ENCODE measurements at regions of chr1 and their contacts with region 1.

Region 1: DNA sequence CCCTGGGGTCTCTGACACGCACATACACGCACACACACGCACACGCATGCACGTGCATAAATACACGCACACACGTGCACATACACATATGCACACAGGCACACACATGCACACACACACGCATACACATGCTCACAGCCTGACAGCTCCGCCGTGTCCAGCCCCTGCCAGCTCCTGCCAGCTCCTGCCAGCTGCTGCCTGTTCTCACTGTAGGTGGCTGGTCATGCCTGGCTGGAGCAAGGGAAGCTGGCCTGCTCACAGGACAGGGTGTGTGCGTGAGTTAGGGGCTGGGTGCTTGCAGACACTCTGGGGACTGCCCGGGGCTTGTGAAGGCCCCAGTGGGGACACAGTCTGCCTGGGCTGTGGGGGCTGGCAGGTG is 4.9 kb downstream of the PLCH2 start:
- DNase-seq: no peak
- H3K4me3 ChIP-seq: no peak overlapping the region
- H3K27ac ChIP-seq: peak overlapping the region; percentile 54
- H3K4me1 ChIP-seq: peaks cover 13% of the 10 kb centered on the region
- H3K27me3 ChIP-seq: no peaks in the 10 kb centered on the region
- CTCF ChIP-seq: no peak

Region 2: DNA sequence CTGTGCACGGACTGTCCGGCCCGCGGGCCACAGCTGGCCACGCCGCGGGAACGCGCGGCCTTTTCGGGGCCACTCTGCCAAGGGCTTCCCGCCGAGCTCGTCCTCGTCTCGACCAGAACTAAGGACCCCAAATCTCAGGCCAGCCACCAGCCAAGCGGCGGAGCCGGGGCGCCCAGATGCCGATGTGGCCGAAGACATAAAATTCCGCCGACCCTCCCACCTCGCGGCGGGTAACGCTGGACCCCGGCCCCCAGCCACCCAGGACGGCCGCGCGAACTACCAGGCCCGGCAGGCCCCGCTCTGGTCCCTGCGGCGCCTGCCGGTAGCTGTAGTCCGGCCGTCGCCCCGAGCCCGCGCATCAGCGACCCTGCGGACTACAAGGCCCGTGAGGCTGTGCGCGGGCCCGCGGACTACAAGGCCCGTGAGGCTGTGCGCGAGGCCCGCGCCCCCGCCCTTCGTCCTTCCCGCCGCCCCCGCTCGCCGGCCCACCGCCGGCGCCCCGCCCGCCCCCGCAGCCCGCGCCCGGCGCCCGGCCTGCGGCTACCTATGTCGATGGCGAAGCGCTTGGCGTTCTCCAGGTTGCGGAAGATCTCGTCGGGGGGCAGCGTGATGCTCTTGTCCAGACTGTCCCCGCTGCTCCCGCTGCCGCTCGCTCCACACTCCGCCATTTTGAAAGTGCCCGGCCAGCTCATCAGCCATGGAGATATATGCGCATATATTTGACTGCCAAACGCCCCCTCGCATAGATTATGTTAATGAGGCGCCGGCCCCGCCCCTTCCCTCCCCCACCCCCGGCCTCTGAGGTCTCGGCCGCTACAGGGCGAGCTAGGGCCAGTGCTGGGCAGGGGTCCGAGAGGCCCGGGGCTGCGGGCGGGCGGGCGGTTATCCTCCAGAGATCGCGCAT is 45.2 kb after region 1 on chr1 and contains the start of gene PANK4:
- CTCF ChIA-PET with region 1: no interaction called
- POLR2A ChIA-PET with region 1: interaction called, 10 read pairs
- intact Hi-C with region 1: no loop called
- DNase-seq: peak; percentile 97
- H3K4me3 ChIP-seq: peak within 1 kb of the TSS; percentile 99
- H3K27ac ChIP-seq: peak within 1 kb of the TSS; percentile 85
- H3K4me1 ChIP-seq: peaks cover 11% of the 10 kb centered on the region
- H3K27me3 ChIP-seq: peaks cover 35% of the 10 kb centered on the region
- CTCF ChIP-seq: no peak
- total RNA-seq, gene PANK4: 45.6 and 53.6 TPM in 2 replicates

Region 3: DNA sequence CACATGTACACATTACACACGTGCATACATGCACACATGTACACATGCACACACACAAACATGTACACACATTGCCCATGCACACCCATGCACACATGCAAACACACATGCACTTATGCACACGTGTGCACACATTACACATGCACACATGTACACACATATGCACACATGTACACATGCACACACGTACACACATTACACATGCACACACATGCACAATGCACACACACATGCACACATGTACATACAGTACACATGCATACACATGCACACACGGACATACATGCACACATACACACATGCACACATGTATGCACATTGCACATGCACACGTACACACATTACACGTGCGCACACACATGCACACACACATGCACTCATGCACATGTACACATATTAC is 415.8 kb after region 1 on chr1:
- CTCF ChIA-PET with region 1: no interaction called
- POLR2A ChIA-PET with region 1: no interaction called
- intact Hi-C with region 1: no loop called
- DNase-seq: no peak
- H3K4me3 ChIP-seq: no peak overlapping the region
- H3K27ac ChIP-seq: no peak overlapping the region
- H3K4me1 ChIP-seq: no peaks in the 10 kb centered on the region
- H3K27me3 ChIP-seq: no peaks in the 10 kb centered on the region
- CTCF ChIP-seq: no peak

Region 4: DNA sequence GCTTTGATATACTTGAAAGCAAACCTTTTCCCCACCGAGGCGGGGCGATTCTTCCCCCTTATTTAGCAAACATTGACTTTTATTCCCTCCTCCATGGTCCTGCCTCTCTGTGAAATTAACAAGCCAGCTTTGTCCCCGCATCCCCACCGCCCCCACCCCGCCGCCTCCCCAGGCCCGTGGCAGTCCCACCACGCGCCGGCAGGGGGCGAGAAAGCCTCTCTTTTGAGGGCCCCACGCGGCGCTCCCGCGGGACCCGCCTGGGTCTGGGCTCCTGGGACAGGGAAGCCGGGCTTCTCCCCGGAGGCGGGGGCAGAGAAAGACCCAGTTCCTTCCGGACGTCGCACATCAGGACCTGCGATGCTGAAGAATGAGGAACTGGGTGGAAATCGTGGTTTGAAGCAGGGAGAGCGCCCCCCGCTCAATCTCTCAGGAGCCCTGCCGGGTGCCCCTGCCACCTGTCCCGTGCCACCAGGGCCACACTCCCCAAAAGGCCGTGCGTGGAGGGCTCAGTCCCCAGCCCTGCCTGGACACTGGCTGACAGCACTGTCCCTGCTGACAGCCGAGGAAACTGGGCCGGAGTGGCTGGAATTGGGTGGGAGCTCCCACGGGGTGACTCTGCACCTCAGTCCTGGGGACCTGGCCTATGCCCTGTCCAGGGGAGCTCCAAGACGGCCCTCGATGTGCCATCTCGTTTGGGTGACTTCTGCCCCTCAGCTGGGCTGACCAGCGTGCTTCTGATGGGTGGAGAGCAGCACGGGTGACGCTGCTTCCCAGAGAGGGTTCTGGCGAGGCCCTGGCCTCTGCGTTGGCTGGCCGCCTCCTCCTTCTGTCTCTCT is 531.7 kb after region 1 on chr1:
- CTCF ChIA-PET with region 1: no interaction called
- POLR2A ChIA-PET with region 1: no interaction called
- intact Hi-C with region 1: no loop called
- DNase-seq: peak; percentile 40
- H3K4me3 ChIP-seq: no peak overlapping the region
- H3K27ac ChIP-seq: no peak overlapping the region
- H3K4me1 ChIP-seq: no peaks in the 10 kb centered on the region
- H3K27me3 ChIP-seq: peaks cover 2% of the 10 kb centered on the region
- CTCF ChIP-seq: peak; percentile 66